ENCODE measurements at regions of chr1 and their contacts with region 1.

Region 1: GRCh38 chr1:67149179-67149770 is 14.5 kb upstream of the C1orf141 start:
- DNase-seq: peak in 5 of 6 donors; percentile 58 to 79 (median 65)
- ATAC-seq: peak; percentile 98 to 100 (median 100)
- H3K4me3 ChIP-seq: no peak overlapping the region
- H3K27ac ChIP-seq: no peak overlapping the region
- H3K4me1 ChIP-seq: peaks cover 0 to 6% (median 0%) of the 10 kb centered on the region in 3 donors
- H3K27me3 ChIP-seq: no peaks in the 10 kb centered on the region
- CTCF ChIP-seq: peak; percentile 33 to 85 (median 69)

Region 2: GRCh38 chr1:66764994-66765578 is 384.2 kb before region 1 on chr1:
- intact Hi-C with region 1: loop called in 2 of 3 experiments (anchors 5 to 10 kb)
- DNase-seq: peak in 1 of 6 donors; percentile 39
- ATAC-seq: peak; percentile 55 to 79 (median 69)
- H3K4me3 ChIP-seq: no peak overlapping the region
- H3K27ac ChIP-seq: no peak overlapping the region
- H3K4me1 ChIP-seq: no peaks in the 10 kb centered on the region
- H3K27me3 ChIP-seq: no peaks in the 10 kb centered on the region
- CTCF ChIP-seq: peak; percentile 41 to 80 (median 52)

Region 3: DNA sequence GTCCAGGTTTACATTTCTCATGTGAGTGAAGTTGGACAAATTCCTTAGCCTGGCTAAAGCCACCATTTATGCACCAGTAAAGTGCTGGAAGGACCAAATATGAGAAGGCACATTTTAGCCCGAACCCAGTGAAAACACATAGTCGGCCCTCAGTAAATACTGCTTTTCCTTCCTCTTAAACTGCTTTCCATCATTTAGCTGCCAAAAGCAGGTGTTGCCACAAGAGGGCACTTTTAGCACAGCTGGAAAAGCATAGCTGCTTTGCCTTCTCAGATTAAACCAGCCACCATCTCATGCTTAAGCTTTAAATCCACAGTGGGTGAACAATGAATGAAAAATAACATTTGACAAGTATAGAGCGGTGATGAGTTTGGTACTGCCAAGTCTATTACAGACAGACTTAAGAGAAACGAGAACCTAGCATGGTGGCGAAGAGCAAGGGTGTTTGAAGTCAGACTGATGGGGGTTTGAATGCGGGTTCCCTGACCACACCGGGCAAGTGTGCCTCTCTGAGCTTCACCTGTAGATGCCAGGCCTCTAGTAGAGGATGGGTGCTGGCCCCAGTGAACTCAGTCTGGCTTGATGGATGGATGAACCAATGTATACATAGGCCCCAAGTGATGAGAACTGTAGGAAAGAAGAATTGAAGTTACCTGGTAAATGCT is 153.1 kb before region 1 on chr1:
- intact Hi-C with region 1: loop called in 2 of 3 experiments (anchors 5 to 10 kb)
- DNase-seq: peak in 4 of 6 donors; percentile 34 to 74 (median 64)
- ATAC-seq: peak; percentile 73 to 88 (median 83)
- H3K4me3 ChIP-seq: no peak overlapping the region
- H3K27ac ChIP-seq: no peak overlapping the region
- H3K4me1 ChIP-seq: peaks cover 17 to 25% (median 18%) of the 10 kb centered on the region in 3 donors
- H3K27me3 ChIP-seq: no peaks in the 10 kb centered on the region
- CTCF ChIP-seq: peak; percentile 19 to 62 (median 42)

Region 4: GRCh38 chr1:67041841-67042503 is 107.3 kb before region 1 on chr1:
- intact Hi-C with region 1: no loop called
- DNase-seq: no peak
- ATAC-seq: no peak
- H3K4me3 ChIP-seq: no peak overlapping the region
- H3K27ac ChIP-seq: no peak overlapping the region
- H3K4me1 ChIP-seq: no peaks in the 10 kb centered on the region
- H3K27me3 ChIP-seq: no peaks in the 10 kb centered on the region
- CTCF ChIP-seq: no peak

Region 5: GRCh38 chr1:67053785-67054772 is 95.2 kb before region 1 on chr1 and contains the start of gene SLC35D1:
- intact Hi-C with region 1: no loop called
- DNase-seq: peak; percentile 66 to 88 (median 74)
- ATAC-seq: peak; percentile 68 to 83 (median 80)
- H3K4me3 ChIP-seq: peak within 1 kb of the TSS; percentile 65 to 83 (median 80)
- H3K27ac ChIP-seq: peak within 1 kb of the TSS; percentile 93 to 97 (median 96)
- H3K4me1 ChIP-seq: peaks cover 12 to 25% (median 20%) of the 10 kb centered on the region in 3 donors
- H3K27me3 ChIP-seq: no peaks in the 10 kb centered on the region
- CTCF ChIP-seq: no peak
- total RNA-seq, gene SLC35D1: 3.3 to 7.7 (median 5.1) TPM

Measured in pancreas (tissue), 10 donors.